ENCODE measurements at regions of chr4 and their contacts with region 1.

Region 1: GRCh38 chr4:77385124-77385969 is 220.3 kb upstream of the CXCL13 start:
- DNase-seq: peak; percentile 48 to 75
- H3K4me3 ChIP-seq: no peak overlapping the region
- H3K27ac ChIP-seq: no peak overlapping the region
- H3K4me1 ChIP-seq: no peaks in the 10 kb centered on the region
- H3K27me3 ChIP-seq: no peaks in the 10 kb centered on the region
- CTCF ChIP-seq: peak; percentile 80 to 82

Region 2: GRCh38 chr4:77332696-77333270 is 52.6 kb before region 1 on chr4:
- intact Hi-C with region 1: no loop called
- DNase-seq: no peak
- H3K4me3 ChIP-seq: no peak overlapping the region
- H3K27ac ChIP-seq: no peak overlapping the region
- H3K4me1 ChIP-seq: no peaks in the 10 kb centered on the region
- H3K27me3 ChIP-seq: no peaks in the 10 kb centered on the region
- CTCF ChIP-seq: no peak

Region 3: GRCh38 chr4:77465271-77465670 is 79.9 kb after region 1 on chr4:
- intact Hi-C with region 1: no loop called
- DNase-seq: no peak
- H3K4me3 ChIP-seq: no peak overlapping the region
- H3K27ac ChIP-seq: no peak overlapping the region
- H3K4me1 ChIP-seq: no peaks in the 10 kb centered on the region
- H3K27me3 ChIP-seq: no peaks in the 10 kb centered on the region
- CTCF ChIP-seq: no peak

Region 4: GRCh38 chr4:77600521-77601451 is 215.4 kb after region 1 on chr4:
- intact Hi-C with region 1: loop called (anchors 5 kb)
- DNase-seq: no peak
- H3K4me3 ChIP-seq: no peak overlapping the region
- H3K27ac ChIP-seq: no peak overlapping the region
- H3K4me1 ChIP-seq: no peaks in the 10 kb centered on the region
- H3K27me3 ChIP-seq: no peaks in the 10 kb centered on the region
- CTCF ChIP-seq: peak; percentile 62 to 72

Region 5: GRCh38 chr4:77623091-77623490 is 237.7 kb after region 1 on chr4:
- intact Hi-C with region 1: loop called (anchors 5 kb)
- DNase-seq: no peak
- H3K4me3 ChIP-seq: no peak overlapping the region
- H3K27ac ChIP-seq: no peak overlapping the region
- H3K4me1 ChIP-seq: peaks cover 0 to 4% (median 0%) of the 10 kb centered on the region in 4 donors
- H3K27me3 ChIP-seq: no peaks in the 10 kb centered on the region
- CTCF ChIP-seq: no peak

Measured in tibial artery (tissue), 4 donors.